ENCODE measurements at regions of chr1 and their contacts with region 1.

Region 1: DNA sequence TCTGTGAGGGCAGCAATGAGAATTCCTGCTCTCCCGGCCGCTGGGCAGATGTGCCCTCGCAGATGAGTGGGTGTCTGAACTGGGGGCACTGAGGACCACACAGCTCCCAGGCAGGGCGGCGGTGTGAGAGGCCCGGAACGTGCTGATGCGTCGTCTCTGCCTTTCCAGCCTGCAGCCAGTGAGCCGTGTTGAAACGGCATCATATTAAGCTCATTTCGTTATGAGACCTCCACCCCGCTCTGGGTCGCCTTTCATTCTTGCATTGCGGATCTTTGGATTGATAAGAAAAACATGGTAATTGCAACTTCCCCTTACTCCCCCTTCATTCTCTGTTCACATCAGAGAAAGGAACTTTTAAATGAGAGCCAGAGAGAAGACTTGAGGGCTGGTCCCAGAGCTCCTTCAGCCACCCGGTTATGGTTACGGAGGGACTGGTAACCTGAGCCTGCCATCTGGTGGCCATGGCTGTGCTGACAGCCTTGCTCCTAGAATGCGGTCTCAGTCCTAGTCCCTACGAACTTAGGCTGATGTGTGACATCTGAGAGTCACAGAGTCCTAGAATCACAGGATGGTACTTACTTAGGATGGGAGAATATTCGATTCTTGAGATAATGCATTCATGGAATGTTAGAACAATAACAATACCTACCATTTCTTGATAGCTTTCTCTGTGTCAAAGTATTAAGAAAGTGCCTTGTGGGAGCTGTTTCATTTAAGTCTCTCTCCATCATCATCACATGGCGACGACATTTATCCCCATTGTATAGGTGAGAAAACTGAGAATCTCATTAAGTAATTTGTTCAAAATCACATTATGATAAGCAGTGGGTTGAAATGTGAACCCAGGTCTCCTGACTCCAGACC is 271.0 kb downstream of the TRABD2B start:
- DNase-seq: peak; percentile 85
- ATAC-seq: peak; percentile 80
- H3K4me3 Mint-ChIP-seq: peak overlapping the region; percentile 39
- H3K27ac Mint-ChIP-seq: no peak overlapping the region
- H3K4me1 Mint-ChIP-seq: peaks cover 15% of the 10 kb centered on the region
- H3K27me3 Mint-ChIP-seq: peaks cover 71% of the 10 kb centered on the region
- CTCF ChIP-seq: peak; percentile 74

Region 2: GRCh38 chr1:47424336-47424982 is 301.8 kb before region 1 on chr1:
- CTCF ChIA-PET with region 1: interaction called, 13 read pairs
- POLR2A ChIA-PET with region 1: no interaction called
- DNase-seq: peak; percentile 75
- ATAC-seq: peak; percentile 97
- H3K4me3 Mint-ChIP-seq: no peak overlapping the region
- H3K27ac Mint-ChIP-seq: no peak overlapping the region
- H3K4me1 Mint-ChIP-seq: peaks cover 11% of the 10 kb centered on the region
- H3K27me3 Mint-ChIP-seq: peaks cover 93% of the 10 kb centered on the region
- CTCF ChIP-seq: peak; percentile 65

Region 3: GRCh38 chr1:47459253-47459788 is 266.9 kb before region 1 on chr1:
- CTCF ChIA-PET with region 1: interaction called, 16 read pairs
- POLR2A ChIA-PET with region 1: no interaction called
- DNase-seq: no peak
- ATAC-seq: peak; percentile 71
- H3K4me3 Mint-ChIP-seq: no peak overlapping the region
- H3K27ac Mint-ChIP-seq: no peak overlapping the region
- H3K4me1 Mint-ChIP-seq: peaks cover 31% of the 10 kb centered on the region
- H3K27me3 Mint-ChIP-seq: peaks cover 47% of the 10 kb centered on the region
- CTCF ChIP-seq: no peak

Region 4: GRCh38 chr1:47532921-47533792 is 193.1 kb before region 1 on chr1:
- CTCF ChIA-PET with region 1: interaction called, 23 read pairs
- POLR2A ChIA-PET with region 1: no interaction called
- DNase-seq: peak; percentile 73
- ATAC-seq: peak; percentile 76
- H3K4me3 Mint-ChIP-seq: peak overlapping the region; percentile 78
- H3K27ac Mint-ChIP-seq: peak overlapping the region; percentile 80; the same call in 1 of the 2 replicates
- H3K4me1 Mint-ChIP-seq: peaks cover 33% of the 10 kb centered on the region
- H3K27me3 Mint-ChIP-seq: peaks cover 34% of the 10 kb centered on the region
- CTCF ChIP-seq: no peak

Region 5: GRCh38 chr1:47677241-47677940 is 48.8 kb before region 1 on chr1:
- CTCF ChIA-PET with region 1: interaction called, 11 read pairs
- POLR2A ChIA-PET with region 1: no interaction called
- DNase-seq: no peak
- ATAC-seq: no peak
- H3K4me3 Mint-ChIP-seq: no peak overlapping the region
- H3K27ac Mint-ChIP-seq: no peak overlapping the region
- H3K4me1 Mint-ChIP-seq: peaks cover 9% of the 10 kb centered on the region; the same call in 1 of the 2 replicates
- H3K27me3 Mint-ChIP-seq: peaks cover 16% of the 10 kb centered on the region
- CTCF ChIP-seq: no peak

Region 6: GRCh38 chr1:47745725-47746597 is 19.7 kb after region 1 on chr1:
- CTCF ChIA-PET with region 1: interaction called, 20 read pairs
- POLR2A ChIA-PET with region 1: no interaction called
- DNase-seq: no peak
- ATAC-seq: no peak
- H3K4me3 Mint-ChIP-seq: no peak overlapping the region
- H3K27ac Mint-ChIP-seq: no peak overlapping the region
- H3K4me1 Mint-ChIP-seq: no peaks in the 10 kb centered on the region
- H3K27me3 Mint-ChIP-seq: peaks cover 26% of the 10 kb centered on the region
- CTCF ChIP-seq: no peak

Region 7: GRCh38 chr1:47797575-47797974 is 71.4 kb after region 1 on chr1:
- CTCF ChIA-PET with region 1: no interaction called
- POLR2A ChIA-PET with region 1: no interaction called
- DNase-seq: no peak
- ATAC-seq: no peak
- H3K4me3 Mint-ChIP-seq: no peak overlapping the region
- H3K27ac Mint-ChIP-seq: no peak overlapping the region
- H3K4me1 Mint-ChIP-seq: no peaks in the 10 kb centered on the region
- H3K27me3 Mint-ChIP-seq: no peaks in the 10 kb centered on the region
- CTCF ChIP-seq: no peak

Region 8: GRCh38 chr1:47823040-47823808 is 97.0 kb after region 1 on chr1:
- CTCF ChIA-PET with region 1: no interaction called
- POLR2A ChIA-PET with region 1: no interaction called
- DNase-seq: no peak
- ATAC-seq: no peak; the same call in 1 of the 2 replicates
- H3K4me3 Mint-ChIP-seq: no peak overlapping the region
- H3K27ac Mint-ChIP-seq: no peak overlapping the region
- H3K4me1 Mint-ChIP-seq: peaks cover 20% of the 10 kb centered on the region
- H3K27me3 Mint-ChIP-seq: no peaks in the 10 kb centered on the region
- CTCF ChIP-seq: no peak